Caco-2 (cell line): ENCODE measurements at regions of chr11 and their contacts with region 1.

Region 1: DNA sequence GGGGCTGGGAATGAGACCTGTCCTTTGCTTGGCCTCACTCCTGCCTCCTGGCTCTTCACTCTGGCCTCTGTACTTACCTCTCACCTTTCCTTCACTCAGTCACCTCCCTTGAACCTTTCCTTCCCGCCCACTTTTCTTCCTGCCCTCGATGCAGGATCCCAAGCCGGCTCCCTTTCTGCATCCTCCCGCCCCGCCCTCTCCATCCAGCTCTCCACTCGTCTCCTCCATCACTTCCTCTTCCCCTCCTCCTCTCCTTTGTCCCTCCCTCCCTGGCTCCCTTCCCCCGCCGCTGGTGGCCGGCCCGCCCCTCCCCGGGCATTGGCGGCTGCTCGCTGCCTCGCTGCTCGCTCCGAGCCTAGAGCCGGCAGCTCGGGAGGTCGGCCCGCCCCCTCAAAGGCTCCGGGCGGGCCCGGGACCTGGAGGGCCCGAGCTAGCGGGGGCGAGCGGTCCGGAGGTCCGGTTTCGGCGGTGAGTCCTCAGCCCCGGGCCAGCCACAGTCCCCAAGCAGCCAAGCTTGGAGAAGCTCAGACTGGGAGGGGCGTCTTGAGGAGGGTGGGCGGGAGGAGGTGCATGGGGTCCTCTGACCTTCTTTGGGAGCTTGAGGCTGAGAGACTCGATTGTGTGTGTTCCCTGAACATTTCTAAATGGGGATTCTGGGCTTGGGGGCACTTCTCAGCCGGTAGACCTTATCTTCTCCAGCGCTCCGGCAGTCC is 13.8 kb downstream of the PHLDB1 start:
- DNase-seq: peak; percentile 96 to 97
- H3K4me3 ChIP-seq: peak overlapping the region; percentile 63
- H3K4me3 Mint-ChIP-seq: peak overlapping the region; percentile 87
- H3K27ac Mint-ChIP-seq: peak overlapping the region; percentile 93
- H3K4me1 ChIP-seq: peaks cover 49% of the 10 kb centered on the region
- H3K4me1 Mint-ChIP-seq: peaks cover 37% of the 10 kb centered on the region
- H3K27me3 ChIP-seq: no peaks in the 10 kb centered on the region
- H3K27me3 Mint-ChIP-seq: no peaks in the 10 kb centered on the region
- CTCF ChIP-seq: no peak

Region 2: DNA sequence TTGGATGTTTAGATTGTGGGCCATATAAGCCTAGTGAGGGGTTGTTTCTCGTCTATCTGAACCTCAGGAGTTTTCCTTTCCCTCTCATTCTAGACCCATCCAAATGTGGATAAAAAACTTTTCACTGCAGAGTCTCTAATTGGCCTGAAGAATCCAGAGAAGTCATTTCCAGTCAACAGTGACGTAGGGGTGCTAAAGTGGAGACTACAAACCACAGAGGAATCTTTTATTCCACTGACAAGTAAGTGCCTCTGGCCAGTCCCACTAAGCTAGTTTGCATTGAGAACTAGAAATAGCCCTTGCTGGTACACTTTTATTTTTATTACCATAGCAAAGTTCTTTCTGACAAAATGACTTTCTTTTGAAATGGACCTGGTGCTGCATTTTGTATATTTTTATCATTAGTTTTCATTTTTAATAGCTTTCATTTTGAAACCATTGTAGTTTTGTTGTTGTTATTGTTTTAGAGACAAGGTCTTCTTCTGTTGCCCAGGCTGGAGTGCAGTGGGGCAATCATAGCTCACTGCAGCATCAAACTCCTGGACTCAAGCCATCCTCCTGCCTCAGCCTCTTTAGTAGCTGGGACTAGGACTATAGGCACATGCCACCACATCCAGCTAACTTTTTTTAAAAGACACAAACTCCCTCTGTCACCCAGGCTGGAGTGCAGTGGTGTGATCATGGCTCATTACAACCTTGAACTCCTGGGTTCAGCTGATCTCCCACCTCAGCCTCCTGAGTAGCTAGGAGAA is 28.4 kb before region 1 on chr11:
- CTCF ChIA-PET with region 1: interaction called, 12 read pairs
- POLR2A ChIA-PET with region 1: no interaction called
- intact Hi-C with region 1: no loop called
- DNase-seq: no peak
- H3K4me3 ChIP-seq: no peak overlapping the region
- H3K4me3 Mint-ChIP-seq: no peak overlapping the region
- H3K27ac Mint-ChIP-seq: no peak overlapping the region
- H3K4me1 ChIP-seq: no peaks in the 10 kb centered on the region
- H3K4me1 Mint-ChIP-seq: peaks cover 4% of the 10 kb centered on the region
- H3K27me3 ChIP-seq: no peaks in the 10 kb centered on the region
- H3K27me3 Mint-ChIP-seq: no peaks in the 10 kb centered on the region
- CTCF ChIP-seq: no peak

Region 3: DNA sequence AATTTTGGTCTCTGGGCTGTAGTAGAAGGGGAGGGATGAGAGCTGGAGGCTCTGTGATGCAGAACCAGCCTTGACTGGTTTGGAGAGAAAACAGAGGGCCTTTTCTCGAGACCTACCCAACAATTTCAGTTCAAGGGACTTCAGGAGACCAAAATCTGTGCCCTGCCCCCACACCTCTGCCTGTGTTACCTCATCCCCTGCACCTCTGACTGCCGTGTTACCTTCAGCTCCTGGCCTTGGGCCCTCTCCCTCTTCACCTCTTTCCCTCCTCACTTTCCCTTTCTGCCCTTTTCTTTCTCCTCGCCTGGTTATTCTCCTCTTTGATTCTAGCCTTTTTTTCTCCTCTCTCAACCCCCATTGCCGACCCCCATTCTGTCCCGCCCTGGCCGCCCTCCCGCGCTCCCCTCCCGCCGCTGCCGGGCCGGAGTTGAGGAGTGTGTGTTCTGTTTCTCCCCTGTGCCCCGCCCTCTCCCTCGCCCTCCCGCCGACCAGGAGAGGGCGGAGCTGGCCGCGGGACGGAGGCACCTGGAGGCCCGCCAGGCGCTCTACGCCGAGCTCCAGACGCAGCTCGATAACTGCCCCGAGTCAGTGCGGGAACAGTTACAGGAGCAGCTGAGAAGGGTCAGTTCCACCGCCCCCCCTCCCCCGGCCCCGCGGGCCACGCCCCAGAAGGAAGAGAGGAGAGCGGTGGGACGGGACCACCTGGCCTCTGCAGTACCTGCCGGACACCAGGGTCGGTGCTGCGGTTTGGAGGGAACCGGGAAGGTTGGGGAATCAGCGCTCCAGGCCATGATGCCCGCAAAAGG is 13.4 kb after region 1 on chr11:
- CTCF ChIA-PET with region 1: interaction called, 19 read pairs
- POLR2A ChIA-PET with region 1: interaction called, 9 read pairs
- intact Hi-C with region 1: loop called (anchors 1 kb)
- DNase-seq: peak in 1 of 2 experiments; percentile 70
- H3K4me3 ChIP-seq: peak overlapping the region; percentile 17
- H3K4me3 Mint-ChIP-seq: peak overlapping the region; percentile 54
- H3K27ac Mint-ChIP-seq: no peak overlapping the region
- H3K4me1 ChIP-seq: 0 out of 2 replicates have a peak, but pooled peaks cover 3% of the 10 kb centered on the region
- H3K4me1 Mint-ChIP-seq: peaks cover 7% of the 10 kb centered on the region
- H3K27me3 ChIP-seq: no peaks in the 10 kb centered on the region
- H3K27me3 Mint-ChIP-seq: no peaks in the 10 kb centered on the region
- CTCF ChIP-seq: peak in 1 of 2 experiments; percentile 52